ENCODE measurements at regions of chr2 and their contacts with region 1.

Region 1: GRCh38 chr2:96856776-96857673 is 791 bp downstream of the ANKRD39 start:
- DNase-seq: peak; percentile 48
- ATAC-seq: peak; percentile 14
- H3K4me3 ChIP-seq: peak overlapping the region; percentile 73
- H3K27ac ChIP-seq: no peak overlapping the region; the same call in 1 of the 2 replicates
- H3K4me1 ChIP-seq: peaks cover 11% of the 10 kb centered on the region
- H3K27me3 ChIP-seq: no peaks in the 10 kb centered on the region
- CTCF ChIP-seq: no peak

Region 2: DNA sequence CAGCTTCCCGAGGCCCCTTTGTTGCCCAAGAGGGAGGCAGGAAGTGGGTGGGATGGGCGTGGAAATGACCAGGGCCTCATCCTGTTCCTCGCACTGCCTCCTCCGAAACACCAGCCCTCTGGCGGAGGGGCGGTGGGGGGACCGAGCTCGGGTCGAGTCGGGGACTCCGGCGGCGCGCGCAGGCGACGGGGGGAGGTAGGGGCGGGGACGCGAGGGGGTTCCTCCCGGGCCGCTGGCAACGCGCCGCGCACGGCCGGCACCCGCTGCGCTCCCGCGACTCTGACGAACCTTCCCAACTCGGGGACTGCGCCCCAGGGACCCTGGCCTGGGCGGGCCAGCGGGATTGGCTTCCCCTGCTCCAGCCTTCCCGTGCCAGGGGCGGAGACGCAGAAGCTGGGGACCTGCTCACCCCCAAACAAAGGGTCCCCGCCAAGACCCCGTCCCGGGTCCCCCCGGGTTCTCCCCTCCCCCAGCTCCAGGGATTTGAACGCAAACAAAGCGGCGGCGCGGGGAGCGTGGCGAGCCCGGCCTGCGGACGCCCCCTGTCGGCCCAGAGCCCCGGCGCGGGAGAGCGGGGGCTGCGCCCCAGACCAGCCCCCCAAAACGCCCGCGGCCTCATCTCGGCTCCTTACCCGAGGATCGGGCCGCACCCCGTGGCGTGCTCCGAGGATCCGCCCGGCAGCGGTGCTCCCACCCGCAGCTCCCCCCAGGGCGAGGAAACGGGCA is 11.7 kb after region 1 on chr2:
- CTCF ChIA-PET with region 1: interaction called, 18 read pairs
- POLR2A ChIA-PET with region 1: no interaction called
- intact Hi-C with region 1: no loop called
- DNase-seq: peak; percentile 84
- ATAC-seq: peak; percentile 78
- H3K4me3 ChIP-seq: peak overlapping the region; percentile 97
- H3K27ac ChIP-seq: peak overlapping the region; percentile 38
- H3K4me1 ChIP-seq: peaks cover 30% of the 10 kb centered on the region
- H3K27me3 ChIP-seq: no peaks in the 10 kb centered on the region
- CTCF ChIP-seq: peak; percentile 74

Region 3: GRCh38 chr2:96916156-96916630 is 59.2 kb after region 1 on chr2:
- CTCF ChIA-PET with region 1: interaction called, 8 read pairs
- POLR2A ChIA-PET with region 1: no interaction called
- intact Hi-C with region 1: loop called (anchors 5 kb)
- DNase-seq: no peak
- ATAC-seq: no peak
- H3K4me3 ChIP-seq: no peak overlapping the region
- H3K27ac ChIP-seq: no peak overlapping the region
- H3K4me1 ChIP-seq: peaks cover 20% of the 10 kb centered on the region
- H3K27me3 ChIP-seq: no peaks in the 10 kb centered on the region
- CTCF ChIP-seq: peak; percentile 20; the same call in 1 of the 2 replicates

Region 4: DNA sequence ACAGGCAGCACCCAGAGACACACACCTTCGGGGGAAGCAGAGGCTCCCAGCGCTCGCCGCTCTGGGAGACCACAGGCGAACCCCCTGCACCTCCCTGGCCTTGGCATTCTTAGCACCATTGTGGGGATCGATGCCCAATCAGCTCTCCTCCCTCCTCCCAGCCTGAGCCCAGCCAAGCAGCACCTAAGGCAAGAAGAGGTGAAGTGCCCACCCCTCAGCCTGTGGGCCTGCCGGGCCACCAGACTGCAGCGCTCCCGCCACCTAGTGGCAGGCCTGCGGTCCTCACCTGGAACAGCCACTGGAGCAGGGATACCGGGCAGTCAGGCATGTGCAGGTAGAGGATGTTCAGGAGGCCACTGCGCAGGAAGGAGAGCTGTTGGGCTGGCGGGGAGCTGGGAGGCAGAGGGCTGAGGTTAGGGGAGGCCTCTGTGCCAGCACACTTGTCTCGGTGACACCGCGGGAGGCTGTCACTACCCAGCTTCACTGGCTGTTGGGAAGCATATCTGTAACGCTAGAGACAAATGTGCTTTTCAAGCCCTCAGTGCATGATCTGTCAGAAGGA is 94.1 kb after region 1 on chr2:
- CTCF ChIA-PET with region 1: interaction called, 12 read pairs
- POLR2A ChIA-PET with region 1: no interaction called
- intact Hi-C with region 1: loop called (anchors 1 kb)
- DNase-seq: peak; percentile 85
- ATAC-seq: peak; percentile 98
- H3K4me3 ChIP-seq: peak overlapping the region; percentile 3; the same call in 1 of the 2 replicates
- H3K27ac ChIP-seq: no peak overlapping the region
- H3K4me1 ChIP-seq: peaks cover 4% of the 10 kb centered on the region; the same call in 1 of the 2 replicates
- H3K27me3 ChIP-seq: no peaks in the 10 kb centered on the region
- CTCF ChIP-seq: peak; percentile 96

Region 5: DNA sequence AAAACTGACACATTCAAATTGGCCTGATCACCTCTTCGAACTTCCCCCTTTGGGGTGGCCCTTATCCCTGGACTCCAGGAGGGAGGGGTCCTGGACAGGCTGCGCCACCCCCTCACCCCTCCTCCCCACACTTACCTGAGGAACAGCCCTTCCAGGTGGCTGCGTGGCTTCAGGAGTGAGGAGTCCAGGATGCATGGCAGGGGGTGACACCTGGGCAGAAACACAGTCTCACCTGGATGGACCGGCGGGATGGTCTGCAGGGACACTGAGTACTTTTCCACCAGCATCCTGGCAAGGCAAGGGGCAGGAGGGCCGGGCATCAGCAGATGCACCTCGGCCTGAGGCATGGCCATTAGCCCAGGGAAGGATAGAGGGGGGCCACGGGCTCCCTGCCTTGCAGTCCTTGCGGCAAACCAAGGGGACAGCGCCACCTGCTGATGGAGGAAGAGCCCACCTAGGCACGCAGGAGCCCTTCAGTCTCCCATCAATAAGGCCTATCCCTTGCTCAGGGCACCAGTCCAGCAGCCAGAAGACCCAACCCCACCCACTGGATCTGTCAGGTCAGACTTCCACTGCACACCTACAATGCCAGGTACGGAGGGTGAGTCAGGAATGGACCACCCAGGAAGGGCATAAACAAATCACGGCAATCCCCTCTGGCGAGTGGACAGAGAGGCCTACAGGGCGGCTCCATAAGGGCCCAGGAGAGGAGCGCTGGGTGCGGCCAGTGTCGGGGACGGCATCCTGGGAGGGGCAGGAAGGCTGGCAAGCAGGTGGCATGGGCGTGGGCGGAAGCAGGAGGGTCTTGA is 103.3 kb after region 1 on chr2:
- CTCF ChIA-PET with region 1: interaction called, 10 read pairs
- POLR2A ChIA-PET with region 1: no interaction called
- intact Hi-C with region 1: no loop called
- DNase-seq: peak; percentile 91
- ATAC-seq: peak; percentile 98
- H3K4me3 ChIP-seq: no peak overlapping the region
- H3K27ac ChIP-seq: no peak overlapping the region
- H3K4me1 ChIP-seq: no peaks in the 10 kb centered on the region
- H3K27me3 ChIP-seq: no peaks in the 10 kb centered on the region
- CTCF ChIP-seq: peak; percentile 94

Region 6: DNA sequence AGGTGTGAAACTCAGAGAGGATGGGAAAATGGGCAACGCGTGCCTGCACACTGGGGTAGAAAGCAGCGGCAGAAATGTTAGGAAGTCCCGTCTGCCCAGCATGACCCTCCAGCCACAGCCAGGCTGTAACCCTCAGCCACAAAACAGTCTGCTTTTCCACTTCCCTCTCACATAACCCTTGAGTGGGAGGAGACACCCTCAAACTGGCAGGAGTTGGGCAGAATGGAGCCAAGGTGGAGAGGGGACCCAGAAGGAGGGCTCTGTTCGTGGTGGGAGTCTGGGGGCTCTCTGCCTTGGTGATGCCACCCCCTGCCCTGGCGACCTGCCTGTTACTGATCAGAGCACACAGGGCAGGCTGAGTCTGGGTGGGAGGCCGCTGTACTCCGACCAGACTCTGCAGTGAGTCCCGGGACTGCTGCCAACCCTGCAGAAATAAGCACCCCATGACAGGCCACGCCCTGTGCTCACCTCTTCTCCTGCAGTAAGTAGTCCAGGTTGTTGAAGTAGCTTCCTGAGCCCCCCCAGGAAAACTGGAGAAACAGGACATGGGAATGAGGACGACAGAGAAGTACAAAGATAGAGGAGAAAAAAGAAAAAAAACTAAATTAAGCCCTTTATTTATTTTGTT is 113.3 kb after region 1 on chr2:
- CTCF ChIA-PET with region 1: interaction called, 4 read pairs
- POLR2A ChIA-PET with region 1: interaction called, 20 read pairs
- intact Hi-C with region 1: no loop called
- DNase-seq: no peak
- ATAC-seq: no peak; the same call in 1 of the 2 replicates
- H3K4me3 ChIP-seq: no peak overlapping the region
- H3K27ac ChIP-seq: no peak overlapping the region
- H3K4me1 ChIP-seq: no peaks in the 10 kb centered on the region
- H3K27me3 ChIP-seq: no peaks in the 10 kb centered on the region
- CTCF ChIP-seq: no peak